A673 (cell line): ENCODE measurements at regions of chr5 and their contacts with region 1.

Region 1: GRCh38 chr5:139787568-139788293 is 7.9 kb upstream of the PSD2 start:
- DNase-seq: peak; percentile 89
- H3K4me3 ChIP-seq: peak overlapping the region; percentile 55
- H3K27ac ChIP-seq: peak overlapping the region; percentile 16
- H3K4me1 ChIP-seq: no peaks in the 10 kb centered on the region
- H3K27me3 ChIP-seq: no peaks in the 10 kb centered on the region
- CTCF ChIP-seq: peak; percentile 92

Region 2: GRCh38 chr5:139774980-139775661 is 12.6 kb before region 1 on chr5:
- CTCF ChIA-PET with region 1: interaction called, 16 read pairs
- POLR2A ChIA-PET with region 1: no interaction called
- intact Hi-C with region 1: no loop called
- DNase-seq: peak; percentile 78
- H3K4me3 ChIP-seq: no peak overlapping the region
- H3K27ac ChIP-seq: no peak overlapping the region
- H3K4me1 ChIP-seq: no peaks in the 10 kb centered on the region
- H3K27me3 ChIP-seq: no peaks in the 10 kb centered on the region
- CTCF ChIP-seq: peak; percentile 97

Region 3: DNA sequence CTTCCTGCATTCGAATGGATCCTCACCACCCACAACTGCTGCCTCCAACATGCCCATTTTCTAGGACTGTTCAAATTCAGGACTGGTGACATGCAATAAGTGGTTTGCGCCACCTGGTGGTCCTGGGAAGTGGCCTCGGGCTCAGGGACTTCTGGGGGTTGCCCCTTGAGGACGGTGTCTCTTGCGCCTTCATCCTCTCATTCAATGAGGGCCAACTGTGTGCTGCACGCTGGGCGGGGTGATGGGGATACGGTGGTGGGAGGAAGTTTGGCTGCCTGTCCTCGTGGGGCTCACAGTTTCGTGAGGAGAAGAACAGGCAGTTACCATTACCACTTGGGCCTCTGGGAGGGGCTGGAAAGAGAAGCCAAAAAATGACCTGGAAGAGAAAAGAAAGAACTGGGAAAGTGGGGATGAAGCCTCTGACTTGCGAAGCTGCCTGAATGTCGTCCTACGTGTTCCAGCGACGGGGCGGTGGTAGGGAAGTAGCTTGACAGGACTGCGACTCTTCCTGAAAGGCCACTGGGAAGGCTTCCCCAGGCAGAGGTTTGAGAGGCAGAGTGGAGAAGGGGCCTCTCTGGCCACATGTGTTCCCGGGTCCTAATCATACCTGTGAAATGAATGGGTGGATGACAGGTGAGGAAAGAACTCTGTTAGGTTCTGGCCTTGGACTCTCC is 56.9 kb after region 1 on chr5:
- CTCF ChIA-PET with region 1: interaction called, 18 read pairs
- POLR2A ChIA-PET with region 1: no interaction called
- intact Hi-C with region 1: loop called (anchors 1 kb)
- DNase-seq: peak; percentile 85
- H3K4me3 ChIP-seq: no peak overlapping the region
- H3K27ac ChIP-seq: no peak overlapping the region
- H3K4me1 ChIP-seq: no peaks in the 10 kb centered on the region
- H3K27me3 ChIP-seq: peaks cover 13% of the 10 kb centered on the region
- CTCF ChIP-seq: peak; percentile 88

Region 4: GRCh38 chr5:139863855-139864558 is 76.3 kb after region 1 on chr5:
- CTCF ChIA-PET with region 1: interaction called, 4 read pairs
- POLR2A ChIA-PET with region 1: no interaction called
- intact Hi-C with region 1: loop called (anchors 1 kb)
- DNase-seq: peak; percentile 67
- H3K4me3 ChIP-seq: no peak overlapping the region
- H3K27ac ChIP-seq: no peak overlapping the region
- H3K4me1 ChIP-seq: no peaks in the 10 kb centered on the region
- H3K27me3 ChIP-seq: peaks cover 4% of the 10 kb centered on the region
- CTCF ChIP-seq: peak; percentile 89

Region 5: GRCh38 chr5:139955053-139955605 is 167.4 kb after region 1 on chr5:
- CTCF ChIA-PET with region 1: no interaction called
- POLR2A ChIA-PET with region 1: no interaction called
- intact Hi-C with region 1: no loop called
- DNase-seq: no peak
- H3K4me3 ChIP-seq: no peak overlapping the region
- H3K27ac ChIP-seq: no peak overlapping the region
- H3K4me1 ChIP-seq: no peaks in the 10 kb centered on the region
- H3K27me3 ChIP-seq: no peaks in the 10 kb centered on the region
- CTCF ChIP-seq: no peak

Region 6: GRCh38 chr5:140157032-140157803 is 369.5 kb after region 1 on chr5:
- CTCF ChIA-PET with region 1: no interaction called
- POLR2A ChIA-PET with region 1: no interaction called
- intact Hi-C with region 1: loop called (anchors 1 kb)
- DNase-seq: peak; percentile 92
- H3K4me3 ChIP-seq: peak overlapping the region; percentile 33
- H3K27ac ChIP-seq: no peak overlapping the region
- H3K4me1 ChIP-seq: peaks cover 6% of the 10 kb centered on the region
- H3K27me3 ChIP-seq: no peaks in the 10 kb centered on the region
- CTCF ChIP-seq: peak; percentile 95